OCI-LY7 (cell line): ENCODE measurements at regions of chr6 and their contacts with region 1.

Region 1: GRCh38 chr6:114108119-114109002 is 137.4 kb upstream of the HDAC2 start:
- DNase-seq: peak; percentile 41
- H3K4me3 ChIP-seq: no peak overlapping the region
- H3K27ac ChIP-seq: no peak overlapping the region
- H3K4me1 ChIP-seq: no peaks in the 10 kb centered on the region
- CTCF ChIP-seq: peak; percentile 82

Region 2: DNA sequence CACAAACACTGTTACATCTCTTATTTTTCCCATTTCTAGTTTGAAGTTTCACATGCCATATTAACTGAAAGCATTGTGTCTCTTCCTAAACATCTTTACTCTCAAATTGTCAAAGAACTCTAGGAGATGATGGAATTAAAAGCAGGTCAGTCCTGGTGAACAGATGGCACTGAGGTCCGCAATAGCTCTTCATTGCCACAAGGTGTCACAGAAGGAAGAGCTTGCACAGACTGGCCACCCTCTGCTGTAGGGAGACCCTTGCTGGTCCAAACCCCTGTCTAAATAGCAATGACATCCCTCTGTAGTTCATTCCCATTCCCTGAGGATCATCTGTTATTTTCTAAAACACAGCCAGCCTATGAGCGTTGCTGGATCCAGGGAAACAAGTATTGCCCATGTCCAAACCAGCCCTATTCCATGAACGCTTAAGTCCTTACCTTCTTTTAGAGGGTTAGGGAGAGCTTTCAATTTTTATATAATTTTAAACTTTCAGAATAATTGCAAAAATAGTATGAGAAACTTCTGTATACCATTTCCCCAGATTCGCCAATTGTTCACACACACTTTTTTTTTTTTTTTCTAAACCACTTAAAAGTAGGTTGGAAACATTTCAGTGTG is 127.3 kb before region 1 on chr6:
- CTCF ChIA-PET with region 1: no interaction called
- POLR2A ChIA-PET with region 1: no interaction called
- intact Hi-C with region 1: no loop called
- DNase-seq: peak; percentile 35
- H3K4me3 ChIP-seq: no peak overlapping the region
- H3K27ac ChIP-seq: no peak overlapping the region
- H3K4me1 ChIP-seq: peaks cover 8% of the 10 kb centered on the region
- CTCF ChIP-seq: peak; percentile 59

Region 3: GRCh38 chr6:113994918-113995342 is 113.4 kb before region 1 on chr6:
- CTCF ChIA-PET with region 1: no interaction called
- POLR2A ChIA-PET with region 1: no interaction called
- intact Hi-C with region 1: loop called (anchors 10 kb)
- DNase-seq: peak; percentile 40
- H3K4me3 ChIP-seq: no peak overlapping the region
- H3K27ac ChIP-seq: no peak overlapping the region
- H3K4me1 ChIP-seq: no peaks in the 10 kb centered on the region
- CTCF ChIP-seq: peak; percentile 74